Activated T-helper 1 cell treated with anti-CD3 and anti-CD28 coated beads, Interleukin-12 subunit alpha, Interleukin-12 subunit beta, Interleukin-2, Interleukin-4 antibody, amounts not matched to agents 30 ng/mL and 10 ng/mL and 1 ng/mL, durations not matched to agents 14 hours and 24 hours and 36 hours (primary cell): ENCODE measurements at regions of chr1 and their contacts with region 1.

Region 1: GRCh38 chr1:160251687-160252526 is 10.4 kb downstream of the DCAF8 start:
- DNase-seq: peak; percentile 36
- H3K4me3 Mint-ChIP-seq: no peak overlapping the region
- H3K27ac Mint-ChIP-seq: peak overlapping the region; percentile 68
- H3K4me1 Mint-ChIP-seq: peaks cover 13% of the 10 kb centered on the region
- H3K27me3 Mint-ChIP-seq: no peaks in the 10 kb centered on the region

Region 2: GRCh38 chr1:160291248-160292220 is 39.6 kb after region 1 on chr1:
- intact Hi-C with region 1: loop called (anchors 1 kb)
- DNase-seq: peak; percentile 49
- H3K4me3 Mint-ChIP-seq: no peak overlapping the region
- H3K27ac Mint-ChIP-seq: no peak overlapping the region
- H3K4me1 Mint-ChIP-seq: peaks cover 5% of the 10 kb centered on the region
- H3K27me3 Mint-ChIP-seq: no peaks in the 10 kb centered on the region